Mammary epithelial cell (primary cell): ENCODE measurements at regions of chr5 and their contacts with region 1.

Region 1: GRCh38 chr5:126917918-126918614 is 112.3 kb downstream of the MARCHF3 start:
- DNase-seq: no peak
- H3K4me3 ChIP-seq: no peak overlapping the region
- H3K27ac ChIP-seq: no peak overlapping the region
- H3K4me1 ChIP-seq: no peaks in the 10 kb centered on the region
- H3K27me3 ChIP-seq: no peaks in the 10 kb centered on the region
- CTCF ChIP-seq: no peak

Region 2: GRCh38 chr5:125970631-125971307 is 947.3 kb before region 1 on chr5:
- CTCF ChIA-PET with region 1: no interaction called
- dilution Hi-C with region 1: no loop called
- in situ Hi-C with region 1: no loop called
- intact Hi-C with region 1: no loop called
- DNase-seq: no peak
- H3K4me3 ChIP-seq: no peak overlapping the region
- H3K27ac ChIP-seq: no peak overlapping the region
- H3K4me1 ChIP-seq: no peaks in the 10 kb centered on the region
- H3K27me3 ChIP-seq: no peaks in the 10 kb centered on the region
- CTCF ChIP-seq: no peak

Region 3: DNA sequence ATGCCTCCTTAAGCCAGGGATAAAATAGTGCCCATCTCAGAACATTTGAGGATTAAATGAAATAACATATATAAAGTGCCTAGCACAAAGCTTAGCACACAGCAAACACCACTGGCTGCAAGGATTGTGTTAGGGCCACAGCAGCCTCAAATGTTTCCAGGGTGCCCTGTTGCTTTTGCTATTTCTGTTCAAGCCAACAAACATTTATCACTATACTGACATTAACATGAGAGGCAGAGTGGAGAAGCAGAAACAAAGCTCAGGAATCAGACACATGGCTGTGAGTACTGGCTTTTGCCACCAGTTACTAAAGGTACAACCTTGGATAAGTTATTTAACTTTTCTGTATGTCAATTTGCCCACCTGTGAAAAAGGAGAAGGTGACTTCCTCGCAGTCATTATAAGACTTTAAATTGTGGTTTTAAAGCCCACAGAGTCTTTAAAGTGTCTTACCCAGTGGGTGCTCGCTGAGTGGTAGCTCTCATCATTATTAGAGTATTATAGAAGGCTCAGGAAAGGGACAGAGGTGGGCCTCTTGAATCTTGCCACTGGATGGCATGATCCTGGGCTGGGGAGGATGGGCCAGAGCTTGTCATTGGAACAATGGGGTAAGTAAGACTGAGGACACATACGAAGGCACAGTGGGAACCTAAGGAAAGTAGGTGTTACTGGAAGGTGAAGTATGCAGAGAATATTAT is 14.0 kb after region 1 on chr5:
- CTCF ChIA-PET with region 1: no interaction called
- dilution Hi-C with region 1: no loop called
- in situ Hi-C with region 1: no loop called
- intact Hi-C with region 1: loop called (anchors 2 kb)
- DNase-seq: no peak
- H3K4me3 ChIP-seq: no peak overlapping the region
- H3K27ac ChIP-seq: no peak overlapping the region
- H3K4me1 ChIP-seq: no peaks in the 10 kb centered on the region
- H3K27me3 ChIP-seq: no peaks in the 10 kb centered on the region
- CTCF ChIP-seq: no peak